Heart left ventricle (tissue), 16 donors: ENCODE measurements at regions of chr11 and their contacts with region 1.

Region 1: DNA sequence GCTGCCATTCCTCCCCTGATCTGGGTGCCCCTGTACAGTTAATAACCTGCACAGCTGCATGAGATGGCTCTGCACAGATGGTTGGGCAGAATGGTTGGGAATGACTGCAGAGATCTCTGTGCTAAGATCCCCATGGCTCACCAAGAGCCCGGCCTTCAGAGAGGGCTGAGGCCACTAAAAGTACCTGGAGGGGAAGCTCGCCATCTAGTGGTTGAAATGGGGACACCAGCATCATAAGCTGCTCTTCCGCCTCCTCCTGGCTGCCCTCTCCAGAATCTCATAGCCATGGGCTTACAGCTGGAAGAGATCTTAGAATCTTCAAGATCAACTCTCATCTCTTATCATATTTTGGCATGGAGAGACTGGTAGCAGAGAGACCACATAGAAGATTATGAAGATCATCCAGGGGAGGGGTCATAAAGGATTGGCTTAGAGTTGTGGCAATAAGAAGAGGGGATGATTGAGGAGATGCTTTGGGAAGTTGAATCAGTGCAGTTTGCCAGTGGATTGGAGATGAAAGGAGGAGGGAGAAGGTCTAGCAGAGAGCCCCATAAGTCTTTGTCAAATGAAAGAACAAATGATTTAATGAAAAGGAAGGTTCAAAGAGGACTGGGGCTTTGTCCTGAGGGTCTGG is 22.0 kb upstream of the TLCD5 start:
- DNase-seq: peak; percentile 54 to 79 (median 66)
- ATAC-seq: peak; percentile 67 to 83 (median 78)
- H3K4me3 ChIP-seq: no peak overlapping the region
- H3K27ac ChIP-seq: no peak overlapping the region
- H3K4me1 ChIP-seq: peaks cover 0 to 14% (median 0%) of the 10 kb centered on the region in 12 donors
- H3K27me3 ChIP-seq: peaks cover 0 to 14% (median 0%) of the 10 kb centered on the region in 9 donors
- CTCF ChIP-seq: peak; percentile 71 to 93 (median 90)
- POLR2A ChIP-seq: no peak

Region 2: GRCh38 chr11:120235024-120235861 is 67.9 kb before region 1 on chr11:
- intact Hi-C with region 1: loop called (anchors 1 to 2 kb)
- DNase-seq: peak in 4 of 5 donors; percentile 50 to 71 (median 60)
- ATAC-seq: peak; percentile 51 to 82 (median 72)
- H3K4me3 ChIP-seq: no peak overlapping the region
- H3K27ac ChIP-seq: no peak overlapping the region
- H3K4me1 ChIP-seq: peaks cover 0 to 14% (median 0%) of the 10 kb centered on the region in 12 donors
- H3K27me3 ChIP-seq: peaks cover 4 to 38% (median 17%) of the 10 kb centered on the region in 9 donors
- CTCF ChIP-seq: peak; percentile 54 to 78 (median 72)
- POLR2A ChIP-seq: no peak